ENCODE measurements at regions of chr3 and their contacts with region 1.

Region 1: DNA sequence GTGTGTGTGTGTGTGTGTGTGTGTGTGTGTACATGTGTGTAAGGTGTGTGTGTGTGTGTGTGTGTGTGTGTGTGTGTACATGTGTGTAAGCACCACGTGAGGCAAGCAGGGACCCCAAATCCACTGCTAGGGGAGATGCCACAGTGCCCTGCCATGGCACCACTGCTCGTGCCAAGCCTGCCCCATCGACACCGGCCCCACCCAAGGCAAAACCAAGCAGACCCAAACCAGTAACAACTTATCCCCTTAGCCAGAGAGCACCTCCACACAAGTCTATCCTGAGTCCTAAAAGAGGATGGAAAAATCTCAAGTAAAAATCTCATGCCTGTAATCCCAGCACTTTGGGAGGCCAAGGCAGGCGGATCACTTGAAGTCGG is 45.1 kb downstream of the BDH1 start:
- DNase-seq: no peak
- H3K4me3 ChIP-seq: no peak overlapping the region
- H3K4me3 Mint-ChIP-seq: no peak overlapping the region
- H3K27ac Mint-ChIP-seq: peak overlapping the region; percentile 72
- H3K4me1 ChIP-seq: peaks cover 8% of the 10 kb centered on the region; the same call in 1 of the 2 replicates
- H3K4me1 Mint-ChIP-seq: peaks cover 14% of the 10 kb centered on the region
- H3K27me3 ChIP-seq: no peaks in the 10 kb centered on the region; the same call in 1 of the 2 replicates
- H3K27me3 Mint-ChIP-seq: no peaks in the 10 kb centered on the region
- CTCF ChIP-seq: no peak

Region 2: DNA sequence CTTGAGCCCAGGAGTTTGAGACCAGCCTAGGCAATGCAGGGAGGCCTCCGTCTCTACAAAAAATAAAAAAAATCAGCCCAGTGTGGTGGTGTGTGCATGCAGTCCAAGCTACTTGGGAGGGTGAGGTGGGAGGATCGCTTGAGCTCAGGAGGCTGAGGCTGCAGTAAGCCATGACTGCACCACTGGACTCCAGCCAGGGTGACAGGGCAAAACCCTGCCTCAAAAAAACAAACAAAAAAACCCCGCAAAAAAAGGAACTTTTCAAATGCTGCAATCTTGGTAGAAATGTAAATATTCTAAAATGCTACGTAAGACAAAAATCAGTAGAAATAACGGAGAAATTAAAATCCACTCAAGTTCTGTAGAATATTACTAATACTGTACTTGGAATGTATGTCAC is 372.9 kb before region 1 on chr3:
- CTCF ChIA-PET with region 1: no interaction called
- POLR2A ChIA-PET with region 1: no interaction called
- intact Hi-C with region 1: no loop called
- DNase-seq: no peak
- H3K4me3 ChIP-seq: no peak overlapping the region
- H3K4me3 Mint-ChIP-seq: no peak overlapping the region
- H3K27ac Mint-ChIP-seq: no peak overlapping the region
- H3K4me1 ChIP-seq: no peaks in the 10 kb centered on the region
- H3K4me1 Mint-ChIP-seq: no peaks in the 10 kb centered on the region
- H3K27me3 ChIP-seq: no peaks in the 10 kb centered on the region
- H3K27me3 Mint-ChIP-seq: no peaks in the 10 kb centered on the region
- CTCF ChIP-seq: no peak

Region 3: DNA sequence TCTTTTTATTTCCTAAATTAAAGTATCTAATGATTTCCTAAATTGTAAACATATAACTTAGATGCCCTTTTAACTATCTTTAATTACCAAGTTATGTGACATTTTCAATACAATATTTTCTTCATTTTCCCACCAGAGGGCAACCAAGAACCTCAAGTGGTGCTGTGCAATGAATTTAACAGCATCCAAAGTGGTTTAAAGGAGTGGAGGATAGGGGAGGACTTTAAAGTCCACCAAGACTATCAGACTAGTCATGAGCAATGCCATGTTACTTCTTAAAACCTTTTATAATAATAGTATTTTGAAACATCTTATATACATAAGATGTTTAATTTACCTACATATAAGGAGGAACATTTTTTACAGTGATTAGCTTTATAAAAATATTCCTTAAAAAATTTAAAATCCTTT is 286.6 kb before region 1 on chr3:
- CTCF ChIA-PET with region 1: no interaction called
- POLR2A ChIA-PET with region 1: no interaction called
- intact Hi-C with region 1: loop called (anchors 1 kb)
- DNase-seq: peak in 1 of 2 experiments; percentile 47
- H3K4me3 ChIP-seq: no peak overlapping the region
- H3K4me3 Mint-ChIP-seq: no peak overlapping the region
- H3K27ac Mint-ChIP-seq: no peak overlapping the region
- H3K4me1 ChIP-seq: peaks cover 41% of the 10 kb centered on the region
- H3K4me1 Mint-ChIP-seq: peaks cover 8% of the 10 kb centered on the region
- H3K27me3 ChIP-seq: no peaks in the 10 kb centered on the region
- H3K27me3 Mint-ChIP-seq: no peaks in the 10 kb centered on the region
- CTCF ChIP-seq: peak; percentile 52 to 68

Region 4: GRCh38 chr3:197256836-197257444 is 253.7 kb before region 1 on chr3:
- CTCF ChIA-PET with region 1: interaction called, 5 read pairs
- POLR2A ChIA-PET with region 1: no interaction called
- intact Hi-C with region 1: loop called (anchors 1 kb)
- DNase-seq: peak in 1 of 2 experiments; percentile 49
- H3K4me3 ChIP-seq: no peak overlapping the region
- H3K4me3 Mint-ChIP-seq: no peak overlapping the region
- H3K27ac Mint-ChIP-seq: no peak overlapping the region
- H3K4me1 ChIP-seq: no peaks in the 10 kb centered on the region
- H3K4me1 Mint-ChIP-seq: peaks cover 18% of the 10 kb centered on the region
- H3K27me3 ChIP-seq: no peaks in the 10 kb centered on the region
- H3K27me3 Mint-ChIP-seq: no peaks in the 10 kb centered on the region
- CTCF ChIP-seq: peak; percentile 51 to 58

Region 5: DNA sequence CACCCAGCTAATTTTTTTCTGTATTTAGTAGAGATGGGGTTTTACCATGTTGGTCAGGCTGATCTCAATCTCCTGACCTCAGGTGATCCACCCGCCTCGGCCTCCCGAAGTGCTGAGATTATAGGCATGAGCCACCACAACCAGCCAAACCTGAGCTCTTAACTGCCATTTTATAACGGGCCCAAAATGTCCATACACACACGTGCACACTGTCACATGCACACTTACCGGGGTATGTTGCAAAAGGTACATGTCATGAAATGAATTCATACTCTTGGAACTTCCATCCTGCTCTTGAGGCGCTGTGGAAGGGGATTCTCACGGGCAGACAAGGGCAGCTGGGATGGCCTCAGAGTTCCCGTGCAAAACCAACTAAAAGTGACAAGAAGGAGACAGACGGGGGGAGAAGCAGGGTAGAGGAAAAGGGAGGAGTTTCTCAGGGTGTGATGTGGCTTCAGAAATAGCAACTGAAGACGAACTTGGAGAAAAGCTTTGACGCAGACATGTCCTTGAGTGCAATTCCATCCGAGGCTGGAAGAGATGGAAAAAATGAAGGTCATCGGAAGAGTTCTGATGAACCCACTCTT is 65.7 kb before region 1 on chr3:
- CTCF ChIA-PET with region 1: no interaction called
- POLR2A ChIA-PET with region 1: no interaction called
- intact Hi-C with region 1: no loop called
- DNase-seq: no peak
- H3K4me3 ChIP-seq: no peak overlapping the region
- H3K4me3 Mint-ChIP-seq: no peak overlapping the region
- H3K27ac Mint-ChIP-seq: no peak overlapping the region
- H3K4me1 ChIP-seq: no peaks in the 10 kb centered on the region
- H3K4me1 Mint-ChIP-seq: peaks cover 18% of the 10 kb centered on the region
- H3K27me3 ChIP-seq: no peaks in the 10 kb centered on the region
- H3K27me3 Mint-ChIP-seq: no peaks in the 10 kb centered on the region
- CTCF ChIP-seq: no peak